A549 (cell line): ENCODE measurements at regions of chr7 and their contacts with region 1.

Region 1: GRCh38 chr7:40057292-40057691 is 77.1 kb downstream of the MPLKIP start:
- DNase-seq: no peak
- ATAC-seq: no peak
- H3K4me3 ChIP-seq: no peak overlapping the region
- H3K27ac ChIP-seq: no peak overlapping the region
- H3K4me1 ChIP-seq: peaks cover 16% of the 10 kb centered on the region; the same call in 2 of the 3 replicates
- CTCF ChIP-seq: no peak
- EP300 ChIP-seq: no peak
- POLR2A ChIP-seq: no peak
- RAD21 ChIP-seq: no peak

Region 2: GRCh38 chr7:39888191-39888845 is 169.0 kb before region 1 on chr7:
- CTCF ChIA-PET with region 1: interaction called, 107 read pairs
- POLR2A ChIA-PET with region 1: no interaction called
- DNase-seq: no peak
- ATAC-seq: no peak; a peak in 2 of 6 replicates
- H3K4me3 ChIP-seq: no peak overlapping the region
- H3K27ac ChIP-seq: no peak overlapping the region
- H3K4me1 ChIP-seq: peaks cover 3% of the 10 kb centered on the region; the same call in 1 of the 3 replicates
- CTCF ChIP-seq: no peak
- EP300 ChIP-seq: no peak
- POLR2A ChIP-seq: no peak
- RAD21 ChIP-seq: no peak

Region 3: GRCh38 chr7:39942883-39943282 is 114.4 kb before region 1 on chr7:
- CTCF ChIA-PET with region 1: interaction called, 10 read pairs
- POLR2A ChIA-PET with region 1: no interaction called
- DNase-seq: no peak
- ATAC-seq: no peak
- H3K4me3 ChIP-seq: no peak overlapping the region
- H3K27ac ChIP-seq: no peak overlapping the region
- H3K4me1 ChIP-seq: peaks cover under 1% of the 10 kb centered on the region; the same call in 1 of the 3 replicates
- CTCF ChIP-seq: no peak
- EP300 ChIP-seq: no peak
- POLR2A ChIP-seq: no peak
- RAD21 ChIP-seq: no peak

Region 4: GRCh38 chr7:39958038-39958437 is 99.3 kb before region 1 on chr7:
- CTCF ChIA-PET with region 1: interaction called, 24 read pairs
- POLR2A ChIA-PET with region 1: no interaction called
- DNase-seq: no peak
- ATAC-seq: no peak
- H3K4me3 ChIP-seq: no peak overlapping the region
- H3K27ac ChIP-seq: no peak overlapping the region
- H3K4me1 ChIP-seq: peaks cover 31% of the 10 kb centered on the region
- CTCF ChIP-seq: no peak
- EP300 ChIP-seq: no peak
- POLR2A ChIP-seq: no peak
- RAD21 ChIP-seq: no peak

Region 5: DNA sequence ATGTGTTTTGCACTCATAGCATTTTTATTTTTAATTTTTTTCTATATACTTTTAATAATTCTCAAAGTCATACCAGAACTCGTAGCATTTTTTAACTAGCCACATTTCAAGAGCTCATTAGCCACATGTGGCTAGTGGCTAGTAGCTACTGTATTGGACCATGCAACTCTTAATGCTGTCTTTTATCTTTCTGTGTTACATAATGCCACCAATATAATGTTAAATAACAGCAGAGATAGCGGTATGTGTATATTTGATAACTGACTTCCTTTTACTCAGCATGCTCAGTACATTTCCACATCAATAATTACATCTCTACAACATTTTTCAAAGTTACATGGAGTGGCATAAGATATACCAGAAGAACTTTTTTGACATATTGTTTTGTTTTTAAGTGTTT is 15.8 kb before region 1 on chr7:
- CTCF ChIA-PET with region 1: interaction called, 18 read pairs
- POLR2A ChIA-PET with region 1: no interaction called
- DNase-seq: no peak
- ATAC-seq: no peak
- H3K4me3 ChIP-seq: no peak overlapping the region
- H3K27ac ChIP-seq: no peak overlapping the region
- H3K4me1 ChIP-seq: no peaks in the 10 kb centered on the region
- CTCF ChIP-seq: no peak
- EP300 ChIP-seq: no peak
- POLR2A ChIP-seq: no peak
- RAD21 ChIP-seq: no peak

Region 6: DNA sequence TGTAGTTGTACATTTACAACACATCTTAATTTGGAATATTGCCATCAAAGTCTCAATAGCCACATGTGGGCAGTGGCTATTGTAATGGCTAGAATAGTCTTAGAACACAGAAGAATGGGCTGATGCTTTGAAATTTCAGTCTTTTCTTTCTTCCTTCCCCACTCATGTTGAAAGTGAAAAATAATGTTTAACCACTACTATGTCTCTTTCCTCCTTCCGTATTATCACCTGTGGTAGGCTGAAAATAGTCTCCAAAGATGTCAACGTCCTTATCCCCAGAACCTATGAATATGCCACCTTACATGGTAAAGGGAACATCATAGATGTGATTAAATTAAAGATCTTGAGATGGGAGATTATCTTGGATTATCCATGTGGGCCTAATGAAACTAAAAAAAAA is 231.5 kb after region 1 on chr7:
- CTCF ChIA-PET with region 1: no interaction called
- POLR2A ChIA-PET with region 1: no interaction called
- DNase-seq: no peak
- ATAC-seq: no peak
- H3K4me3 ChIP-seq: no peak overlapping the region
- H3K27ac ChIP-seq: no peak overlapping the region
- H3K4me1 ChIP-seq: no peaks in the 10 kb centered on the region
- CTCF ChIP-seq: no peak
- EP300 ChIP-seq: no peak
- POLR2A ChIP-seq: no peak
- RAD21 ChIP-seq: no peak